Activated naive CD4-positive, alpha-beta T cell treated with anti-CD3 and anti-CD28 coated beads for 36 hours (primary cell): ENCODE measurements at regions of chr1 and their contacts with region 1.

Region 1: GRCh38 chr1:36703526-36704208 is 221.0 kb upstream of the CSF3R start:
- DNase-seq: peak; percentile 83
- H3K4me3 Mint-ChIP-seq: no peak overlapping the region
- H3K27ac Mint-ChIP-seq: no peak overlapping the region
- H3K4me1 Mint-ChIP-seq: peaks cover 2% of the 10 kb centered on the region
- H3K27me3 Mint-ChIP-seq: peaks cover 9% of the 10 kb centered on the region

Region 2: GRCh38 chr1:36752891-36753361 is 49.3 kb after region 1 on chr1:
- CTCF ChIA-PET with region 1: no interaction called
- intact Hi-C with region 1: no loop called
- DNase-seq: no peak
- H3K4me3 Mint-ChIP-seq: no peak overlapping the region
- H3K27ac Mint-ChIP-seq: no peak overlapping the region
- H3K4me1 Mint-ChIP-seq: no peaks in the 10 kb centered on the region
- H3K27me3 Mint-ChIP-seq: peaks cover 15% of the 10 kb centered on the region

Region 3: GRCh38 chr1:37038227-37039076 is 334.8 kb after region 1 on chr1:
- CTCF ChIA-PET with region 1: no interaction called
- intact Hi-C with region 1: loop called (anchors 10 kb)
- DNase-seq: no peak
- H3K4me3 Mint-ChIP-seq: no peak overlapping the region
- H3K27ac Mint-ChIP-seq: no peak overlapping the region
- H3K4me1 Mint-ChIP-seq: peaks cover 8% of the 10 kb centered on the region
- H3K27me3 Mint-ChIP-seq: peaks cover 55% of the 10 kb centered on the region

Region 4: GRCh38 chr1:37323486-37324377 is 620.1 kb after region 1 on chr1:
- CTCF ChIA-PET with region 1: interaction called, 3 read pairs
- intact Hi-C with region 1: loop called (anchors 5 kb)
- DNase-seq: peak; percentile 54
- H3K4me3 Mint-ChIP-seq: no peak overlapping the region
- H3K27ac Mint-ChIP-seq: no peak overlapping the region
- H3K4me1 Mint-ChIP-seq: peaks cover under 1% of the 10 kb centered on the region
- H3K27me3 Mint-ChIP-seq: peaks cover 23% of the 10 kb centered on the region